RWPE1 (cell line): ENCODE measurements at regions of chr5 and their contacts with region 1.

Region 1: GRCh38 chr5:88680253-88681132 is 202.5 kb downstream of the MEF2C start:
- DNase-seq: peak; percentile 77
- H3K27ac ChIP-seq: no peak overlapping the region
- CTCF ChIP-seq: peak; percentile 92

Region 2: DNA sequence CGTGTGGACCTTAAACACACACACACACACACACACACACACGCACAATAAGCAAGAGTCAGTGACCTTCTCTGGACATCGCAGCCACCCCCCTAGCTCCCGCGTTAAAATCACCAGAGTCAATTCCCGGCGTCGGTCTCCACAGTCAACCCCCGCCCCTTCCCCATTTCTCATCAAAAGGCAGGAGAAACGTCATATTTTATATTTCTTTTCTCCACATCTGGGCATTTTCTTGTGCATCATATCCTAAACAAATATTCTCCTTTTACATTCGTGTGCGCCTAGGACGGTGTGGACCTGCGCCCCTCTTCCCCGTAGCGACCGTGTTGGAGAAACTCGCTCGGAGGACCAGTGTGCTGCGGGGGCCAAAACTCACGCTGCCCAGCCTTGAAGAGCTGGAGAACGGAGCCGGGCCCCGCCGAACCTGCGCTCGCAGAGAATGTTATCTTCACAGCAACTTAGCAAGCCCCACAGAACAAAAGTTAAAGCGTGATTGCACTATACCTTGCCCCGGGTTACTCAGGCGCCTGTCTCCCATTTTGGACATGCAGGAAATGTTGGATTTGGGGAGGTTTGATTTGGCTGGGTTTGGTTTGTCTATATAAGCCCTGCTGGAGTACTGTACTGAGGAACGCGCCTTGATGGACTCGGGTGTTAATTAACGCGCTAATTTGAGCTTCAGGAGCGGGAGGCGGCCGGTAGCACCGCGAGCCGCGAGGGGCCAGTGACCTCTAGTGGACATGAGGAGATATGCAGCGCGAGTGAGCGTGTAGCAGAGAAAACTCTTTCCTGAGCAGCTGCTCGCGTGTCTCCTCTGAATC is 10.1 kb after region 1 on chr5:
- CTCF ChIA-PET with region 1: interaction called, 12 read pairs
- POLR2A ChIA-PET with region 1: no interaction called
- DNase-seq: peak; percentile 80
- H3K27ac ChIP-seq: no peak overlapping the region
- CTCF ChIP-seq: peak; percentile 99